CD8-positive, alpha-beta T cell (primary cell): ENCODE measurements at regions of chr9 and their contacts with region 1.

Region 1: DNA sequence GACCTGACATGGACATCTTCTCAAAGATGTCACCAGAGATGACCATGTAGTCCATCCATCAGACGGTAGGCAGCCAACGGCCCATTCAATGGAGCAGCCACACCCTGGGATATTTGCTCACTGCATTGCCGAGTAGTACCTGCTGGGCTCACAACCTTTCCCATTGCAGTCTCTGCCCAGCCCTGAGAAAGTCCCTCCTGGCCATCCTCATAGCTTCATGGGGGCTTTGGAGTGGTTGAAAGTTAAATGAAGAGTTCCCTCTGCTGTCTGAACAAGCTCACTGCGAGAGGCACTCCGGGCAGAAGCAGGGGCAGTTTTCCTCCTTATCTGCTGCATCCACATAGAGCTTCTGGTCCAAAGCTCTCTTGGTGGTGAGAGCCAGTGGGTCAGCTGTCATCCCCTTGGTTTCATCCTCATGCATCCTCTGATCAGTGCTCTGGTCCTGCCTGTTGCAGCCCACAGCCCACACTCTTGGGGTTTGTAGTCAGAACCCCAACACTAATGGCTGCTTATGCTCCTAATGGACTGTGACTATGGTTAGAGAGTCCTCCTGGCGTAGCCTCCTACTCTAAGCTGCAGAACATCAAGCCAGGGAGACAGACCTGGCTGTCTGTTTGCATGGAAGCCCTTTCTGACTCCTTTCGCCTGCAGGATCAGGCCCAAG is 23.4 kb downstream of the TNFSF8 start:
- DNase-seq: peak in 3 of 9 experiments; percentile 26 to 69 (median 60)
- ATAC-seq: peak; percentile 37
- H3K4me3 ChIP-seq: no peak overlapping the region
- H3K4me3 Mint-ChIP-seq: peak overlapping the region; percentile 23
- H3K27ac ChIP-seq: peak overlapping the region in 1 of 2 experiments; percentile 53
- H3K27ac Mint-ChIP-seq: peak overlapping the region; percentile 95
- H3K4me1 ChIP-seq: peaks cover 69% of the 10 kb centered on the region
- H3K4me1 Mint-ChIP-seq: peaks cover 92% of the 10 kb centered on the region
- H3K27me3 ChIP-seq: no peaks in the 10 kb centered on the region
- H3K27me3 Mint-ChIP-seq: no peaks in the 10 kb centered on the region
- CTCF ChIP-seq: peak; percentile 70

Region 2: DNA sequence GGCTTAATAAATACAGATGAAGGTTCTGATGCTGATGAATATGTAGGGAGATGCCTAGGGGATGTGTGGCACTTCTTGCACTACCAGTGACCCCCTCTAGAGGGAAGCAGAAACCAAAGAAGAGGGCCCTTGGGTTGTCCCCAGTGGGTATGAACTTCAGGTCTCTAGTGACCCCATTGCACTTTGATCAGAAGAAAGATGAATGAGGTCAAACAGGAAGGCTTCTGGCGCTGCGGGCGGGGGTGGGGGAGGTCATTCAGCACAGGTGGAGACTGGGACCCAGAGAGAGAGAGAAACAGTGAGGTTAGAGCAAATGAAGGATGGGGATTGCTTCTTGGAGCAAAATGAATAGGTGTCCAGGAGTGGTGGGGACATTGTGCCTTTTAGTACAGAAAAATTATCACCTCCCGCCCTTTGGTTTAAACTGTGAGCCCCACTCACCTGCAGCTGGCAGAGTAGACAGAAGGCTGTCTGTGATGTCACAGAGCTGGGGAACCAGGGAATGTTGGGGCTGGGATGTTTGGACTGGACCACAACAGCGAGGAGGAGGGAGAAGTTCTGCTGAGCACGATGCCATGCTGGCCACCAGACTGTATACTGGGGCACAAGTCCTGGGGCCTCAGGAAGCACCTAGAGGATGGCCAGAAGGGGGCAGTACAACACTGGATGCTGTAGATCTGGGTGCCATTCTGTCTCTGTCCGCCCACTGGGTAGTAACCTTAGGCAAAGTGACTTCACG is 225.3 kb before region 1 on chr9 and contains the start of gene TEX48:
- CTCF ChIA-PET with region 1: interaction called, 41 read pairs
- POLR2A ChIA-PET with region 1: no interaction called
- intact Hi-C with region 1: loop called (anchors 1 to 2 kb)
- DNase-seq: peak; percentile 48 to 89 (median 74)
- ATAC-seq: peak; percentile 89
- H3K4me3 ChIP-seq: no peak within 1 kb of the TSS
- H3K4me3 Mint-ChIP-seq: peak within 1 kb of the TSS; percentile 30
- H3K27ac ChIP-seq: no peak within 1 kb of the TSS
- H3K27ac Mint-ChIP-seq: peak within 1 kb of the TSS; percentile 25
- H3K4me1 ChIP-seq: peaks cover 5% of the 10 kb centered on the region
- H3K4me1 Mint-ChIP-seq: peaks cover 13% of the 10 kb centered on the region
- H3K27me3 ChIP-seq: peaks cover 0 to under 1% of the 10 kb centered on the region in 2 experiments
- H3K27me3 Mint-ChIP-seq: peaks cover 5% of the 10 kb centered on the region
- CTCF ChIP-seq: peak; percentile 58
- total RNA-seq, gene TEX48: not detected

Region 3: DNA sequence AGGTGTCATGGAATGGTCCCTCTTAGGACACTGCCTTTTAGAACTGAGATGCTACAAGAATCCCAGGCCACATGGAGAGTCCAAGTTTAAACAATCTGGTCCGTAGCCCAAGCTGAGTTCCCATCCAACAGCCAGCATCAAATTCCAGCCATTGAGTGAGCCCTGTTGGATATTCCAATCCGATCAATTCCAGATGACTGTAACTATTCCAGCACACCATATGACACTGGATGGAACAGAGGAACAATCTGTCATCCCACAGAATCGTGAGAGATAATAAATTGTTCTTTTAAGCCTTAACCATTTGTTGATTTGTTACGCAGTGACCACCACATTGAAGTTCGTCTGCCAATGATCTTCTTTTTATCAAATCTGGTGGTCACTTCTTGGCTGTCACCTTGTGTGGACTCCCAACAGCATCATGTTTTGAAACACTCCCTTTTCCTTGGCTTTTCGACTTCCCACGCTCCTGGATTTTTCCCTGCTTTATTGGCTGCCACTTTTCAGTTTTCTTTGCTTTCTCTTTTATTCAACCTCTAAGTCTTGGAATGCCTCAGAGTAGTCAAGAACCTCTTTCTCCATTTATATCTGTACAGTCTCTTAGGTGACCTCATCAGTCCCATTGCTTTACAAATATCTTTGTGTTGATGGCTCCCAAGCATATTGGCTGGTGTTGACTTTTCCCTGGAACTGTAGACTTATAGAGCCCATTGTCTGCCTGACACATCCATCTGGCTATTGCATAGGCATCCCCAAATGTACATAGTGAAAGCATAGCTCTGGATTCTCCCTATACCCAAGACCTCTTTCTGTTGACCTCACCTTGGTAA is 147.3 kb before region 1 on chr9:
- CTCF ChIA-PET with region 1: interaction called, 12 read pairs
- POLR2A ChIA-PET with region 1: no interaction called
- intact Hi-C with region 1: no loop called
- DNase-seq: no peak
- ATAC-seq: no peak
- H3K4me3 ChIP-seq: no peak overlapping the region
- H3K4me3 Mint-ChIP-seq: no peak overlapping the region
- H3K27ac ChIP-seq: no peak overlapping the region
- H3K27ac Mint-ChIP-seq: no peak overlapping the region
- H3K4me1 ChIP-seq: peaks cover 3% of the 10 kb centered on the region
- H3K4me1 Mint-ChIP-seq: peaks cover 21% of the 10 kb centered on the region
- H3K27me3 ChIP-seq: no peaks in the 10 kb centered on the region
- H3K27me3 Mint-ChIP-seq: no peaks in the 10 kb centered on the region
- CTCF ChIP-seq: no peak

Region 4: DNA sequence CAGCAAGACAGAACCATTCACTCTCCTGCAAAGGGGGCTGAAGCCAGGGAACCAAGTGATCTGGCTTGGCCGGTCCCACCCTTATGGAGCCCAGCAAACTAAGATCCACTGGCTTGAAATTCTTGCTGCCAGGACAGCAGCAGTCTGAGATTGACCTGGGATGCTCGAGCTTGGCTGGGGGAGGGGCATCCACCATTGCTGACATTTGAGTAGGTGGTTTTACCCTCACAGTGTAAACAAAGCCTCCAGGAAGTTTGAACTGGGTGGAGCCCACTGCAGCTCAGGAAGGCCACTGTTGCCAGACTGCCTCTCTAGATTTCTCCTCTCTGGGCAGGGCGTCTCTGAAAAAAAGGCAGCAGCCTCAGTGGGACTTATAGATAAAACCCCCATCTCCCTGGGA is 37.2 kb before region 1 on chr9:
- CTCF ChIA-PET with region 1: interaction called, 3 read pairs
- POLR2A ChIA-PET with region 1: no interaction called
- intact Hi-C with region 1: loop called in 1 of 2 experiments (anchors 5 kb)
- DNase-seq: peak in 7 of 9 experiments; percentile 14 to 74 (median 29)
- ATAC-seq: no peak
- H3K4me3 ChIP-seq: peak overlapping the region in 1 of 2 experiments; percentile 45
- H3K4me3 Mint-ChIP-seq: peak overlapping the region; percentile 39
- H3K27ac ChIP-seq: peak overlapping the region in 1 of 2 experiments; percentile 51
- H3K27ac Mint-ChIP-seq: peak overlapping the region; percentile 80
- H3K4me1 ChIP-seq: peaks cover 15% of the 10 kb centered on the region
- H3K4me1 Mint-ChIP-seq: peaks cover 21% of the 10 kb centered on the region
- H3K27me3 ChIP-seq: no peaks in the 10 kb centered on the region
- H3K27me3 Mint-ChIP-seq: no peaks in the 10 kb centered on the region
- CTCF ChIP-seq: no peak

Region 5: DNA sequence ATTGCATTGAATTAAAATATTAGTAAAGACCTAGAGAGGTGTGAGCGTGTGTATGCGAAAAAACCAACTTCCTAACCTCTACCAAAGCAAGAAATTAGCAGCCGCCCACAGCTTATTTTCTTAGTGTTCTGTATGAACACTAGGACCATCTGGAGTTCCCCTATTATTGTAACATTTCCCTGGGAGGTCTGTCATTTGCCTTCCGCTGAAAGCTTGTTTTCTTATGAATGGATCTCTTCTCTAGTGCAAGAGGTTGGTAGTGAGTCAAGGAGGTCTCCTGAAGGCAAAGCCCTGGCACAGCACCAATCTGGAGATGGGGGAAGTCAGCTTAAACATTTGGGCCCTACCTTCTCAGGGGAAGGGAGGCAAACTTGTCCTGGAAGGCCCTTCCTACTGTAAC is 12.6 kb after region 1 on chr9:
- CTCF ChIA-PET with region 1: interaction called, 33 read pairs
- POLR2A ChIA-PET with region 1: interaction called, 5 read pairs
- intact Hi-C with region 1: no loop called
- DNase-seq: no peak
- ATAC-seq: no peak
- H3K4me3 ChIP-seq: no peak overlapping the region
- H3K4me3 Mint-ChIP-seq: peak overlapping the region; percentile 9
- H3K27ac ChIP-seq: peak overlapping the region in 1 of 2 experiments; percentile 15
- H3K27ac Mint-ChIP-seq: peak overlapping the region; percentile 89
- H3K4me1 ChIP-seq: peaks cover 59% of the 10 kb centered on the region
- H3K4me1 Mint-ChIP-seq: peaks cover 90% of the 10 kb centered on the region
- H3K27me3 ChIP-seq: no peaks in the 10 kb centered on the region
- H3K27me3 Mint-ChIP-seq: no peaks in the 10 kb centered on the region
- CTCF ChIP-seq: no peak

Region 6: GRCh38 chr9:114945616-114946412 is 38.8 kb after region 1 on chr9:
- CTCF ChIA-PET with region 1: interaction called, 10 read pairs
- POLR2A ChIA-PET with region 1: no interaction called
- intact Hi-C with region 1: no loop called
- DNase-seq: no peak
- ATAC-seq: no peak
- H3K4me3 ChIP-seq: no peak overlapping the region
- H3K4me3 Mint-ChIP-seq: no peak overlapping the region
- H3K27ac ChIP-seq: no peak overlapping the region
- H3K27ac Mint-ChIP-seq: no peak overlapping the region
- H3K4me1 ChIP-seq: no peaks in the 10 kb centered on the region
- H3K4me1 Mint-ChIP-seq: peaks cover 2% of the 10 kb centered on the region
- H3K27me3 ChIP-seq: no peaks in the 10 kb centered on the region
- H3K27me3 Mint-ChIP-seq: no peaks in the 10 kb centered on the region
- CTCF ChIP-seq: no peak

Region 7: DNA sequence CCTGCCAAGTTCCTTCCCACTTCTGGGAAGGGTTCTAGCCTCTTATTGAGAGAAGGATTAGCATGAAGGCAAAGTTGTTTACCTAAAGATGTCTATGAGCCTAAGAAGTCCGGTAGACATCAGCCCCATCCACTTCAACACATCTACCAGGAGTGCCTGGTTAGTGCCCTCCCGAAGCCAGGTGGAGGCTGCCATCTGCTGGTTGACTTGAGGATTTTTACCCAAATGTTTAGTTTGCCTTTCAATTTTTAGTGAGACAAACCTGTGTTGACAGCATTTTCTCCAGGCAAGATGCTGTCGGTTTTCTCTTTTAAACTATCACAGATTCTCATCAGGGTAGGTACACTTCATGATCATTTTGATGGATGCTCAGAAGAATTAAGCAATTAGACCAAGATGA is 107.0 kb after region 1 on chr9:
- CTCF ChIA-PET with region 1: interaction called, 19 read pairs
- POLR2A ChIA-PET with region 1: no interaction called
- intact Hi-C with region 1: loop called (anchors 1 kb)
- DNase-seq: peak; percentile 60 to 86 (median 79)
- ATAC-seq: peak; percentile 79
- H3K4me3 ChIP-seq: no peak overlapping the region
- H3K4me3 Mint-ChIP-seq: no peak overlapping the region
- H3K27ac ChIP-seq: no peak overlapping the region
- H3K27ac Mint-ChIP-seq: no peak overlapping the region
- H3K4me1 ChIP-seq: peaks cover 7% of the 10 kb centered on the region
- H3K4me1 Mint-ChIP-seq: peaks cover 9% of the 10 kb centered on the region
- H3K27me3 ChIP-seq: no peaks in the 10 kb centered on the region
- H3K27me3 Mint-ChIP-seq: no peaks in the 10 kb centered on the region
- CTCF ChIP-seq: peak; percentile 89